Transverse colon (tissue), 4 donors: ENCODE measurements at regions of chr6 and their contacts with region 1.

Region 1: GRCh38 chr6:112163295-112164257 is 76.2 kb downstream of the FAM229B start:
- DNase-seq: peak; percentile 72
- H3K4me3 ChIP-seq: no peak overlapping the region
- H3K27ac ChIP-seq: no peak overlapping the region
- H3K4me1 ChIP-seq: no peaks in the 10 kb centered on the region
- H3K27me3 ChIP-seq: no peaks in the 10 kb centered on the region
- CTCF ChIP-seq: peak; percentile 65 to 82 (median 73)
- EP300 ChIP-seq: no peak
- POLR2A ChIP-seq: no peak

Region 2: DNA sequence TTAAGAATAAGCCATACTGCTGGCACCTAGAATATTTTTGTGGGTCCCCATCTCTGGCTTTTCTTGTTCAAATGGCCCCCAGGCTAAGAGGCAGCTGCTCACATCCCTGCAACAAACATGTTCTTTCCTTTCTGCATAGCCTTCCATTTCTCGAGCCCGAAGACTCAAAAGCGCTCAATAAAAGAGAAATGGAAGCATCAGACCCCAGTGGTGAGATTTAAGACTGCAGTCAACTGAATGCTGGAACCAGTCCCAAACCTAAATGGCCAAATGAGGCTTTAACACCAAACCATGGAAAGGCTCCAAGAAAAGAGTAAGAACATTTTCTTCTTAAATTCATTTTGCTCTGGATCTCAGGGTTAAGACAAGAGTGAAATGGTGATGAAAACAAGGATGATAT is 435.8 kb before region 1 on chr6:
- in situ Hi-C with region 1: loop called in 1 of 4 experiments (anchors 25 kb)
- intact Hi-C with region 1: no loop called
- DNase-seq: no peak
- H3K4me3 ChIP-seq: no peak overlapping the region
- H3K27ac ChIP-seq: no peak overlapping the region
- H3K4me1 ChIP-seq: peaks cover 0 to 20% (median 6%) of the 10 kb centered on the region in 4 donors
- H3K27me3 ChIP-seq: no peaks in the 10 kb centered on the region
- CTCF ChIP-seq: peak in 4 of 5 experiments; percentile 13 to 27 (median 17)
- EP300 ChIP-seq: no peak
- POLR2A ChIP-seq: no peak

Region 3: DNA sequence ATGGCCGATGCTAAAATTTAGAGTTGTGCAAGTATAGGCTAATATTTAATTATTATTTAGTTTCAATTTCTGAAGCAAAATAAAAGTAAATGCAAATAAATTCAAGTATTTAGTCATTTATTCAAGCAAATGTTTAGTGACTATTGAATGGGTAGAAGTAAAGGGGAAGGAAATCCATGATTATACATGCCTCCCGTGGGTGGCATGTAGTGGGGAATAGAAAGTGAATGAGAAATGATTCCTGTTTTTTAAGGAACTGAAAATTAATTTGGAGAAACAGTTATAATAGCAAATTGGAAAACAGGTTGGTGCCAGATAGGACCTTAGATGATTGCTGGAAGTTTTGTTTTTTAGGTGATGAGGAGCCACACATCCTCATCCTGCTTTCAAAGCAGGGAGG is 40.8 kb before region 1 on chr6:
- in situ Hi-C with region 1: no loop called
- intact Hi-C with region 1: no loop called
- DNase-seq: no peak
- H3K4me3 ChIP-seq: no peak overlapping the region
- H3K27ac ChIP-seq: no peak overlapping the region
- H3K4me1 ChIP-seq: peaks cover 0 to 3% (median 0%) of the 10 kb centered on the region in 4 donors
- H3K27me3 ChIP-seq: no peaks in the 10 kb centered on the region
- CTCF ChIP-seq: no peak
- EP300 ChIP-seq: no peak
- POLR2A ChIP-seq: no peak

Region 4: DNA sequence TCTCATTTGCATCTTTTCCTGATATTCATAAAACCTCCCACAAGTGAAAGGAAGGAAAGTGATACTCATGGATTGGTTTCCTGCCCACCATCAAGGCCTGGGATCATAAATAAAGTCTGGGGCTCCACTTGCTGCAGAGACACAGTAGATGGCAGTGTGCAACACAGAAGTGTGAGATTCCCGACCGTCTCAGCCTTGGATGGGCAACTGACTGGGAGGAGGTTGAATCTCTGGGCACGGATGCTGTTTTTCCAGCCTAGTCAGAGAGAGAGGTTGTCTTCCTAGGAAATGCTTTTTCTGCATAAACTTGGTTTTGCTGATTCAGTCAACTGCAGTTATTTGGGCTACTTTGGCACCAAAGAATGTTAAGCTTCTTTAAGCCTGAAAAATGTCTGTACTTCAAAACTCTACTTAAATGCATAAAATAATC is 173.6 kb after region 1 on chr6:
- in situ Hi-C with region 1: no loop called
- intact Hi-C with region 1: no loop called
- DNase-seq: no peak
- H3K4me3 ChIP-seq: no peak overlapping the region
- H3K27ac ChIP-seq: no peak overlapping the region
- H3K4me1 ChIP-seq: no peaks in the 10 kb centered on the region
- H3K27me3 ChIP-seq: no peaks in the 10 kb centered on the region
- CTCF ChIP-seq: peak in 4 of 5 experiments; percentile 17 to 36 (median 34)
- EP300 ChIP-seq: no peak
- POLR2A ChIP-seq: no peak